Panc1 (cell line): ENCODE measurements at regions of chr3 and their contacts with region 1.

Region 1: DNA sequence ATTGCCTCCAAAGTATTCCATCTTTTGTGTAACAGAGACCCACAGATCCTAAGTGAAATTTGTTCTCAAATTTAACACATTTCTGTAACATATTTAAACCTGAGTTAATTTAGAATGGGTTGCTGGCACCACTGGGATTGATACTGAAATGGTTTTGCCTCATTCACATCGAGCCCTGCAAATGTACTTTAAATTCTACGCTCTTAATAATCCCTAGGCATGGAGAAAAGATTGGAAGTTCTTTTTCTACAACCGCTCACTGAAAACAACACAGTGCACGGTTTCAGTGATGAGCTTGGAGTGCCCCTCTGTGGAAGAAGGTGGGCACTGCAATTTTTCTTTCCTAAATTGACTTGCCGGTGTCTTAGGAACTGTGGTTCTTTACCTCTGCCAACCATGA is 109.9 kb upstream of the ATP11B start:
- DNase-seq: peak; percentile 72
- ATAC-seq: peak; percentile 91
- H3K4me3 ChIP-seq: peak overlapping the region in 1 of 2 experiments; percentile 68; a peak in 1 of 4 replicates
- H3K27ac ChIP-seq: no peak overlapping the region
- H3K4me1 ChIP-seq: peaks cover 10% of the 10 kb centered on the region; the same call in 1 of the 2 replicates
- H3K27me3 ChIP-seq: peaks cover 37% of the 10 kb centered on the region
- CTCF ChIP-seq: peak; percentile 98

Region 2: GRCh38 chr3:181210275-181210674 is 1473.2 kb before region 1 on chr3:
- CTCF ChIA-PET with region 1: interaction called, 6 read pairs
- POLR2A ChIA-PET with region 1: no interaction called
- in situ Hi-C with region 1: no loop called
- intact Hi-C with region 1: loop called (anchors 2 kb)
- DNase-seq: no peak
- ATAC-seq: no peak
- H3K4me3 ChIP-seq: no peak overlapping the region
- H3K27ac ChIP-seq: no peak overlapping the region
- H3K4me1 ChIP-seq: no peaks in the 10 kb centered on the region
- H3K27me3 ChIP-seq: peaks cover 5% of the 10 kb centered on the region; the same call in 1 of the 2 replicates
- CTCF ChIP-seq: peak; percentile 48; the same call in 1 of the 2 replicates

Region 3: GRCh38 chr3:181326637-181327223 is 1356.7 kb before region 1 on chr3:
- CTCF ChIA-PET with region 1: no interaction called
- POLR2A ChIA-PET with region 1: no interaction called
- in situ Hi-C with region 1: no loop called
- intact Hi-C with region 1: loop called (anchors 10 kb)
- DNase-seq: peak; percentile 8
- ATAC-seq: no peak
- H3K4me3 ChIP-seq: no peak overlapping the region
- H3K27ac ChIP-seq: no peak overlapping the region
- H3K4me1 ChIP-seq: no peaks in the 10 kb centered on the region
- H3K27me3 ChIP-seq: no peaks in the 10 kb centered on the region
- CTCF ChIP-seq: peak; percentile 78

Region 4: GRCh38 chr3:181709537-181710279 is 973.7 kb before region 1 on chr3:
- CTCF ChIA-PET with region 1: no interaction called
- POLR2A ChIA-PET with region 1: no interaction called
- in situ Hi-C with region 1: no loop called
- intact Hi-C with region 1: loop called (anchors 1 kb)
- DNase-seq: no peak
- ATAC-seq: no peak
- H3K4me3 ChIP-seq: peak overlapping the region in 1 of 2 experiments; percentile 34; a peak in 2 of 4 replicates
- H3K27ac ChIP-seq: no peak overlapping the region
- H3K4me1 ChIP-seq: peaks cover 4% of the 10 kb centered on the region; the same call in 1 of the 2 replicates
- H3K27me3 ChIP-seq: peaks cover 40% of the 10 kb centered on the region
- CTCF ChIP-seq: peak; percentile 95

Region 5: GRCh38 chr3:182235504-182235903 is 447.9 kb before region 1 on chr3:
- CTCF ChIA-PET with region 1: no interaction called
- POLR2A ChIA-PET with region 1: no interaction called
- in situ Hi-C with region 1: no loop called
- intact Hi-C with region 1: no loop called
- DNase-seq: no peak
- ATAC-seq: no peak
- H3K4me3 ChIP-seq: no peak overlapping the region
- H3K27ac ChIP-seq: no peak overlapping the region
- H3K4me1 ChIP-seq: no peaks in the 10 kb centered on the region
- H3K27me3 ChIP-seq: no peaks in the 10 kb centered on the region
- CTCF ChIP-seq: no peak

Region 6: GRCh38 chr3:182258538-182259177 is 424.8 kb before region 1 on chr3:
- CTCF ChIA-PET with region 1: no interaction called
- POLR2A ChIA-PET with region 1: no interaction called
- in situ Hi-C with region 1: no loop called
- intact Hi-C with region 1: loop called (anchors 5 kb)
- DNase-seq: peak; percentile 28
- ATAC-seq: peak; percentile 78
- H3K4me3 ChIP-seq: no peak overlapping the region
- H3K27ac ChIP-seq: no peak overlapping the region
- H3K4me1 ChIP-seq: no peaks in the 10 kb centered on the region
- H3K27me3 ChIP-seq: 0 out of 2 replicates have a peak, but pooled peaks cover under 1% of the 10 kb centered on the region
- CTCF ChIP-seq: peak; percentile 81; the same call in 1 of the 2 replicates

Region 7: DNA sequence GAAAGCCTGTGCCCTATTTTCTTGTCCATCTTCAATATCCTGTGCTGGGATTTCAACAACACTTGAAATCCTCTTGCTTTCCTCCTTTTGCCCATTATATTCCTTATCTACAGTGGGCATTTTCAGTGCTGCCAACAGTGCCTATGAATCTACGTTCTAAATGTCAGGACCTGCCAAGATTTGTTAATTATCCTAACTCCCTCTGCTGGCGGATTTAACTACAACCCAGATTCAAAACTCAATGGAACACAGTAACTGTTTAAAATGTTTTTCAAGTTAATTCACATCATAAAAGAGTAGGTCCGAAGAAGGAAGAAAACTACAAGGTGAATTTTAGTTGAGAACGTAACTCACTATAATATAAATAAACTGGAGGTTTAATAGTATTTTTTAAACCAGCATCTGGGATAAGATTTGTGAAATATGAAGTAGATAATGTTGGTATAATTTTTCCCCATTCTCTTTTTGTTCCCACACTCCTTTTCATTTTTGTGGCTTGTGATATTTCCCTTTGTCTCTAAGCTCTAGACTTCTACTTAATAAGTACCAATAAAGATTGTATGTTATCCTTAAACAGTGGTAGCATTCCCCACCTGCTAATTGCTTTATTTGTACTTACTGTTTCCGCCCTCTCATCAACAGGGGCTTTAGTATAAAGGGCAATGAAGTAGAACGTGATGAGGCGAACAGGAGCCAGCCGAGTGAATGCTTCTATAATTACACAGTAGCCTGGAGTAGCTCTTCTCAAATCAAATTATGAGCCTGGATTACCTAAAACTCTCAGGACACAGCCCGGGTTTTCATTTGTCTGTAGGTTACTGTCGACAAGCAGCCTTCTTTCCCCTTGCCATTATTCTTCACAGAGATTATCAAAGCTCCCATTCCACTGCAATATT is 192.6 kb before region 1 on chr3:
- CTCF ChIA-PET with region 1: no interaction called
- POLR2A ChIA-PET with region 1: no interaction called
- in situ Hi-C with region 1: no loop called
- intact Hi-C with region 1: loop called (anchors 10 kb)
- DNase-seq: peak; percentile 7
- ATAC-seq: no peak; the same call in 1 of the 2 replicates
- H3K4me3 ChIP-seq: no peak overlapping the region
- H3K27ac ChIP-seq: no peak overlapping the region
- H3K4me1 ChIP-seq: no peaks in the 10 kb centered on the region
- H3K27me3 ChIP-seq: no peaks in the 10 kb centered on the region
- CTCF ChIP-seq: peak; percentile 70

Region 8: GRCh38 chr3:182508916-182509711 is 174.3 kb before region 1 on chr3:
- CTCF ChIA-PET with region 1: no interaction called
- POLR2A ChIA-PET with region 1: no interaction called
- in situ Hi-C with region 1: no loop called
- intact Hi-C with region 1: no loop called
- DNase-seq: no peak
- ATAC-seq: no peak
- H3K4me3 ChIP-seq: no peak overlapping the region
- H3K27ac ChIP-seq: no peak overlapping the region
- H3K4me1 ChIP-seq: no peaks in the 10 kb centered on the region
- H3K27me3 ChIP-seq: peaks cover 2% of the 10 kb centered on the region; the same call in 1 of the 2 replicates
- CTCF ChIP-seq: no peak

Region 9: DNA sequence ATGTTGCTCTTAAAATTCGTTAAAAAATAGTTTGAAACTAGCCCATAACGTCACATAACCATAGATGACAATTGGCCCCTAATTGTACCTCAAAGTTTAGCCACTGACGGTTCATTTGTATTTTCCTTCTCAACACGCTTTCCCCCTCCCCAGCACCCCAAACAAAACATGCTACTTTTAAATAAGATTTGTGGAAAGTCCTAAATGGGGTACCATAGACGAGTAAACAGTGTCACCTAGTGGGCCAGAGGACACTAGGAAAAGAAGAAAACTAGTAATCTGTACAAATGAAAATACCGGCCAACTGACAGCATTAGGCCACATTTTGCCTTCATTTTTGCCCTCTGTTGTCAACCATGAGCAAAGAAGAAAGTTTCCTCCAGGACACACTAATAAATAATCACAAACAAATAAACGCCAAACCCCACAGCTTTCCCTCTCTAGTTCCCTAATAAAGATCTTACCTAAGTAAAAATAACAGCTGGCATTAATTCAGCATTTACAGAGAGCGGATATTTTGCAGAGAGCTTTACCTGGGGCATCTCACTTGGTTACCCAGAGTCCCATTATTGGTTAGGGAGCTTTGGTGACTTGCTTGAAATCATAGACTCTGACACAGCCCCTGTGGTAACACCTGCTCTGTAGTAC is 65.2 kb before region 1 on chr3:
- CTCF ChIA-PET with region 1: no interaction called
- POLR2A ChIA-PET with region 1: no interaction called
- in situ Hi-C with region 1: no loop called
- intact Hi-C with region 1: loop called (anchors 5 kb)
- DNase-seq: peak; percentile 10
- ATAC-seq: 0 out of 2 replicates have a peak, but pooled peaks have one; percentile 63
- H3K4me3 ChIP-seq: no peak overlapping the region
- H3K27ac ChIP-seq: no peak overlapping the region
- H3K4me1 ChIP-seq: no peaks in the 10 kb centered on the region
- H3K27me3 ChIP-seq: peaks cover 9% of the 10 kb centered on the region
- CTCF ChIP-seq: peak; percentile 68